Pancreas (tissue), 10 donors: ENCODE measurements at regions of chr7 and their contacts with region 1.

Region 1: DNA sequence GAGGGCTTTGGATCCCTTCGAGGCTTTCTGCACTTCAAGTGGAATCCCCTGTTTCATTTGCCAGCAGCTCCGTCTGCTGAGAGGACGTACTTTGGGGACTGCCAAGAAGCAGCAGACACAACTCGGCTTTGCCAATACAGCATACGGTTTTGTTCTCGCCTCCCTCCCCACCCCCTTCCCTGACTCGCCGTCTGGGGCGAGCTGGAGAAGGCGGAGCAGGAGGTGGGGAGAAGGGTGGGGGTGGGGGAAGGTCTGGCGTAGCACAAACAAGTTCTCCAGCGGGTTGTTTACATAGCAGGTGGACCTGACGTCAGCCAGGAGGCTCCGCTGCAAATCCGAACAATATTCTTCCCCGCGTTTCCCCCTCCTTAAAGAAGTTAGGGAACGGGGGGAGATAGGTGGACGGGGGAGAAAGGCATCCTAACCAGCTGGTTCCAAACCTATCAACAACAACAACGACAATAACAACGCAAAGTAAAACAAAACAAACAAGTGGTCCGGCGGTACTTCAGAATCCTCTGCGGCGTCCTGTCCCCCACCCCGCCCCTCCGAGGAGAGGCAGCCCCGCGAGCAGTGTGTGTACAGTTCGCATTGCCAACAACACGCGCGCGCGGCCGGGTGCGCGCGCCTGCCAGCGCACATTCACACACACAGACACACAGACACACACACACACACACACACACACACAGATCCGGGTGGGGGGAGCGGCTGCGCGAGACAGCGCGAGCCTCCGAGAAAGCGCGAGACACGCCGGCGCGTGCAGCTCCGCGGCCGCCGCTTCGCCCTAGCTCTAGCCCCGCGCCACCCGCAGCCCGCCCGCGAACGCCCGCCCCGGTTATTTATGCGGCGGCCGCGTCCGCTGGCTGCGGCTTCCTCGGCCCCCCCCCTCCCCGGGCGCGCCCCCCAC is 167.0 kb upstream of the PPP1R3A start:
- DNase-seq: peak; percentile 89 to 95 (median 94)
- ATAC-seq: peak; percentile 75 to 80 (median 78)
- H3K4me3 ChIP-seq: peak overlapping the region; percentile 36 to 71 (median 56)
- H3K27ac ChIP-seq: peak overlapping the region; percentile 85 to 97 (median 94)
- H3K4me1 ChIP-seq: peaks cover 10 to 31% (median 19%) of the 10 kb centered on the region in 3 donors
- H3K27me3 ChIP-seq: peaks cover 0 to 4% (median 0%) of the 10 kb centered on the region in 4 donors
- CTCF ChIP-seq: no peak

Region 2: GRCh38 chr7:114405427-114405826 is 319.6 kb after region 1 on chr7:
- intact Hi-C with region 1: loop called in 1 of 3 experiments (anchors 10 kb)
- DNase-seq: no peak
- ATAC-seq: peak; percentile 80 to 97 (median 94)
- H3K4me3 ChIP-seq: no peak overlapping the region
- H3K27ac ChIP-seq: no peak overlapping the region
- H3K4me1 ChIP-seq: peaks cover 0 to 17% (median 6%) of the 10 kb centered on the region in 3 donors
- H3K27me3 ChIP-seq: no peaks in the 10 kb centered on the region
- CTCF ChIP-seq: peak; percentile 15 to 29 (median 18)